Pancreas (tissue), 10 donors: ENCODE measurements at regions of chr1 and their contacts with region 1.

Region 1: GRCh38 chr1:182143154-182143657 is 81.7 kb upstream of the ZNF648 start:
- DNase-seq: peak; percentile 80 to 100 (median 92)
- ATAC-seq: peak; percentile 77 to 85 (median 80)
- H3K4me3 ChIP-seq: no peak overlapping the region
- H3K27ac ChIP-seq: peak overlapping the region in 3 of 4 donors; percentile 68 to 90 (median 84)
- H3K4me1 ChIP-seq: peaks cover 32 to 37% (median 35%) of the 10 kb centered on the region in 3 donors
- H3K27me3 ChIP-seq: no peaks in the 10 kb centered on the region
- CTCF ChIP-seq: peak; percentile 85 to 95 (median 94)

Region 2: DNA sequence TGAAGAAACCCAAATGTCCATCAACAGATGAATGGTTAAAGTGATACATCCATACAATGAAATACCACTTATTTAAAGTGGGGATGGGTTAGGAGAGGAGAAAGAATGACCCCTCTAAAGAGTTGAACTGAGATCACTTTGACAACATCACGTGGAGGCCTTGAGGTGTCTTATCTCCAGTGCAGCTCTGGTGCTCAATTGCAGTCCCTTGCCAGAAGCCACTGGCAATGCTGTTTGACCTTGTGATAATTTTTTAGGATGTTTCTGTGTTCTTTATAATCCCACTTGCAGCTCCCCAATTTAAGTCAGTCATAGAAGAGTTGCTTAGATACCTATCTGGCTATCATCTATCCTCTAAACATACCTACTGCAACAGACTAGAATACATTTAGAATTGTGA is 249.3 kb before region 1 on chr1:
- intact Hi-C with region 1: no loop called
- DNase-seq: no peak
- ATAC-seq: no peak
- H3K4me3 ChIP-seq: no peak overlapping the region
- H3K27ac ChIP-seq: no peak overlapping the region
- H3K4me1 ChIP-seq: no peaks in the 10 kb centered on the region
- H3K27me3 ChIP-seq: no peaks in the 10 kb centered on the region
- CTCF ChIP-seq: no peak

Region 3: GRCh38 chr1:182301467-182302198 is 158.4 kb after region 1 on chr1:
- intact Hi-C with region 1: loop called in 1 of 3 experiments (anchors 10 kb)
- DNase-seq: peak in 3 of 6 donors; percentile 24 to 36 (median 30)
- ATAC-seq: peak; percentile 63 to 92 (median 90)
- H3K4me3 ChIP-seq: no peak overlapping the region
- H3K27ac ChIP-seq: peak overlapping the region in 3 of 4 donors; percentile 16 to 68 (median 57)
- H3K4me1 ChIP-seq: peaks cover 5 to 20% (median 16%) of the 10 kb centered on the region in 3 donors
- H3K27me3 ChIP-seq: no peaks in the 10 kb centered on the region
- CTCF ChIP-seq: no peak

Region 4: GRCh38 chr1:182391362-182392044 is 248.3 kb after region 1 on chr1 and contains the start of gene GLUL:
- intact Hi-C with region 1: loop called in 2 of 3 experiments (anchors 5 kb)
- DNase-seq: peak; percentile 90 to 98 (median 94)
- ATAC-seq: peak; percentile 84 to 91 (median 88)
- H3K4me3 ChIP-seq: peak within 1 kb of the TSS; percentile 80 to 95 (median 90)
- H3K27ac ChIP-seq: peak within 1 kb of the TSS; percentile 92 to 99 (median 96)
- H3K4me1 ChIP-seq: peaks cover 2 to 17% (median 17%) of the 10 kb centered on the region in 3 donors
- H3K27me3 ChIP-seq: no peaks in the 10 kb centered on the region
- CTCF ChIP-seq: peak in 1 of 4 donors; percentile 29
- total RNA-seq, gene GLUL: 261 to 512 (median 332) TPM

Region 5: DNA sequence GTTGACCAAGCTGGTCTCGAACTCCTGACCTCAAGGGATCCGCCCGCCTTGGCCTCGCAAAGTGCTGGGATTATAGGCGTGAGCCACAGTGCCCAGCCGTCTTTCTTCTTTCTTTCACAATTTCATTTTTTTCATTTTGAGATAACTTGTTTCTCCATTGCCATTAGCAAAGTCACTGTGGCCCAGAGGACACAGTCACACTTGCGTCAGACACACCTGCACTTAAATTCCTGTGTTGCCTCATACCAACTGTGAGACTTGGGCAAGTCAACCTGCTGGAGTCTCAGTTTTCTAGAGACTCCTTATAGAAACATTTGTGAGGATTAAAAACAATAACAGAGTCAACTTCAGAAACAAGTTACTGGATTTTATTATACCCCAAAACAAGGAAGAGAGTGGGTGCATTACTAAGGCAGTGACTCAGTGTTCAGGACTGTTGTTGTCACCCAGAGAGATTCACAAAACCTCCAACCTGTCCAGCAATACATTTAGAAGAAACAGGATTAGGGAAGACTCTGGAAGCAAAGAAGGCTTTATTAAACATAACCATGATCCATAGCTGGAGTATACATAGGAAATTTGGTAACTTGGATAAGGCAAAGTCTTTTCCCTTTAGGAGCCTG is 254.7 kb after region 1 on chr1:
- intact Hi-C with region 1: loop called in 2 of 3 experiments (anchors 5 kb)
- DNase-seq: no peak
- ATAC-seq: no peak
- H3K4me3 ChIP-seq: no peak overlapping the region
- H3K27ac ChIP-seq: peak overlapping the region in 2 of 4 donors; percentile 24 to 56
- H3K4me1 ChIP-seq: peaks cover 0 to 3% (median 0%) of the 10 kb centered on the region in 3 donors
- H3K27me3 ChIP-seq: no peaks in the 10 kb centered on the region
- CTCF ChIP-seq: no peak

Region 6: DNA sequence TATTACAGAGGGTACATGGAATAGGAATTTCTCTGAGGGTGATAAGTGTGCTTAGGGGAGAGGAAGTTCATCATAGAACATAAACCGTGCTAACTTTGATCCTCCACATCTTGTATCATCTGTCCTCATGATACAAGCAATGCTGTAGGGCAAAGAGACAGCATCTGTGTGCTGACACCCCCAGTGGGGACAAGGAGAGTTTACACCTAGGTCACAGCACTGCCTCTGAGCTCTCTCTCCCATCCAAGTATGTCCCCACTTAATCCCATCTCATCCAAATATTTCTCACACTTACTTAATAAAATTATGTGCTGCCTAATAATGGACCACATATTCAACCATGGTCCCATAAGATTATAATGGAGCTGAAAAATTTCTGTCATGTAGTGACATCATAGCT is 261.6 kb after region 1 on chr1:
- intact Hi-C with region 1: loop called in 2 of 3 experiments (anchors 5 kb)
- DNase-seq: no peak
- ATAC-seq: no peak
- H3K4me3 ChIP-seq: no peak overlapping the region
- H3K27ac ChIP-seq: no peak overlapping the region
- H3K4me1 ChIP-seq: peaks cover 0 to 7% (median 0%) of the 10 kb centered on the region in 3 donors
- H3K27me3 ChIP-seq: no peaks in the 10 kb centered on the region
- CTCF ChIP-seq: no peak